Activated CD8-positive, alpha-beta memory T cell treated with anti-CD3 and anti-CD28 coated beads, Interleukin-2, amount 10 ng/mL, durations not matched to agents 7 days and 5 days (primary cell): ENCODE measurements at regions of chr1 and their contacts with region 1.

Region 1: GRCh38 chr1:206725109-206725963 is 40.6 kb downstream of the MAPKAPK2 start:
- DNase-seq: peak; percentile 77
- ATAC-seq: peak; percentile 65
- H3K4me3 Mint-ChIP-seq: no peak overlapping the region
- H3K27ac Mint-ChIP-seq: peak overlapping the region; percentile 24
- H3K4me1 Mint-ChIP-seq: peaks cover 59% of the 10 kb centered on the region
- H3K27me3 Mint-ChIP-seq: no peaks in the 10 kb centered on the region

Region 2: DNA sequence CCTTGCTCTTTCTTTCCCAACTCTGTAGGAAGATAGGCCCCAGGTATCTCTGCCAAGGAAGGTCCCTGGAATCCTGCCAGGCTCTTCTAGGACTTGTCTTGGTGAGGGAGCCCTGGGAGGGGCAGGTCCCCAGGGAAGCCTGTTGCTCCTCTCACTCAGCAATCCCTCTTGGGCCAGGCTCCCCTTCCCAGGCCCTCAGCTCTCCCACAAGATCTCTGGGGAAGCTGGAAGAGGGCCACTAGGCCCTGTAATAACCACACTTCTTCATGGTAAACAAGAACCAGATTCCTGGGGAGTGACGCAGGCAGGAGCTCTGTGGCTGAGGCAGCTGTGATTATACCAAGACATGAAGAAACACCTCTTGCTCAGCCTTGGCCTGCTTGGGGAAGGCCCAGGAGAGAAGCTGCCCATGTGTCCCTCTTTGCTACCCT is 50.6 kb before region 1 on chr1:
- CTCF ChIA-PET with region 1: no interaction called
- DNase-seq: no peak
- ATAC-seq: no peak
- H3K4me3 Mint-ChIP-seq: no peak overlapping the region
- H3K27ac Mint-ChIP-seq: no peak overlapping the region
- H3K4me1 Mint-ChIP-seq: peaks cover 8% of the 10 kb centered on the region
- H3K27me3 Mint-ChIP-seq: peaks cover 7% of the 10 kb centered on the region

Region 3: DNA sequence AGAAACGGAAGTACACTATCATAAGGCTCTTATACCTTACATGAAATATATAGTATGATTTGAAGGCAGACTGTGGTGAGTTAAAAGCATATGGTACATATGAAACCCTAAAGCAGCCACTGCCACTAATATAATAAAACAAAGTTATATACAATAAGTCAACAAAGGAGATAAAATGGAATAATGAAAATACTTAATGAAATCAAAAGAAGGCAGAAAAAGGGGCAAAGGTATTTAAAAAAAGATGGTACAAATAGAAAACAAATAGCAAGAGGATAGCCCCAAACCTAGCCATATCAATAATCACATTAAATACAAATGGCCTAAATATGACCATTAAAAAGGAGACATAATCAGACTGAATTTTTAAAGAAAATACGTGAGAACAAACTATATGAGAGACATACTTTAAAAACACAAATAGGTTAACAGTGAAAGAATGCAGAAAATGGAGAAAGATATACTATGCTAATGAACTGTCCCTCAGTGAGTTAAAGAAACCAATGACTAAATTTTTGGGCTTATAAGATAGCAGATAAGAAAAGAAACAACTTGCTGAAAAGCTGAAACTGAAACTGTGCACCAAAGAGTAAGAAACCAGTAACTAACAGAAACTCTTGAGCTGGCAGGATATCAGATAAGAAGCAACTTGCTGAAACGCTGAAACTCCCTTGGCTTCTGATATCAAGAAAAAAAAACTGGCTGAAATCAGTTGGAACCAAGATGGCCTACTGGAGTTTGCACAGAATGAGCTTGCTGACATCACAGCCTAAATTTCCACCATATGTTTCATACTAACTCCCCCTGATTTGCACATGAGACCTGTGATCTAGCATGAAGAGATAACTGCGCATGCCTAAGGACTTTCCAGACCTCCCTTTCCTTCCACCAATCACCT is 91.3 kb after region 1 on chr1:
- CTCF ChIA-PET with region 1: interaction called, 488 read pairs
- DNase-seq: no peak
- ATAC-seq: peak; percentile 93
- H3K4me3 Mint-ChIP-seq: peak overlapping the region; percentile 57
- H3K27ac Mint-ChIP-seq: peak overlapping the region; percentile 88
- H3K4me1 Mint-ChIP-seq: peaks cover 39% of the 10 kb centered on the region
- H3K27me3 Mint-ChIP-seq: no peaks in the 10 kb centered on the region

Region 4: GRCh38 chr1:206851341-206852010 is 126.1 kb after region 1 on chr1:
- CTCF ChIA-PET with region 1: no interaction called
- DNase-seq: no peak
- ATAC-seq: no peak
- H3K4me3 Mint-ChIP-seq: no peak overlapping the region
- H3K27ac Mint-ChIP-seq: no peak overlapping the region
- H3K4me1 Mint-ChIP-seq: peaks cover 7% of the 10 kb centered on the region
- H3K27me3 Mint-ChIP-seq: peaks cover 52% of the 10 kb centered on the region

Region 5: GRCh38 chr1:206899717-206900116 is 174.4 kb after region 1 on chr1:
- CTCF ChIA-PET with region 1: interaction called, 11 read pairs
- DNase-seq: peak; percentile 18
- ATAC-seq: no peak
- H3K4me3 Mint-ChIP-seq: no peak overlapping the region
- H3K27ac Mint-ChIP-seq: no peak overlapping the region
- H3K4me1 Mint-ChIP-seq: peaks cover 12% of the 10 kb centered on the region
- H3K27me3 Mint-ChIP-seq: peaks cover 2% of the 10 kb centered on the region

Region 6: DNA sequence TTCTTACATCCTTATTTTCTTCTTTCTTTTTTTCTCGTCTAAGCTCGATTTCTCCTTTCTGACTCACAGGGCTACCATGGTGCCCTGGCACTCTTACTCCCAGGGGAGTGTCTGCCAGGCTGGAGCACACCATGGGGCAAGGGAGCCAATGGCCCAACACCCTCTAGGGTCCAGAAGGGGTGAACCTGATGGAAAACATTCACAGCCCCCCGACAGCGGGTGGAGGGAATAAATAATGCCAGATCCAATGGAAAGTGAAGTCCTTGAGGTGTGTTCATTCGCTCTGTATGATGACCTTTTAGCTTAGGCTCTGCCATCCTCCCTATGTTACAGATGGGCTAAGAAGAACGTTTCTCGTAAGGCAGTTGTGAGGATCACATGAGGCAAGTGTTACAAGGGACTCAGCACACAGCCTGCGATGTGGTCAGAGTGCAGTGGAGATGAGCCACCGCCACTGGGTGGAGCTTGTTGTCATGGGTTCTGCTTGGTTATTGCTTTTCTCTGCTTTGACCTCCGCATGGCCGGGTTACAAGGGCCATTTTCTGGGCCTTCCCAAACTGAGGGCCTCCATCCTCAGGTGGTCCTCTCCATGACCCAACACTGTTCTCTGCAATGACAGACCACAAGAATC is 199.9 kb after region 1 on chr1:
- CTCF ChIA-PET with region 1: interaction called, 16 read pairs
- DNase-seq: peak; percentile 90
- ATAC-seq: peak; percentile 74
- H3K4me3 Mint-ChIP-seq: no peak overlapping the region
- H3K27ac Mint-ChIP-seq: no peak overlapping the region
- H3K4me1 Mint-ChIP-seq: peaks cover 8% of the 10 kb centered on the region
- H3K27me3 Mint-ChIP-seq: no peaks in the 10 kb centered on the region